ENCODE measurements at regions of chr12 and their contacts with region 1.

Region 1: GRCh38 chr12:121443193-121443870 is 43.4 kb downstream of the RNF34 start:
- DNase-seq: peak; percentile 83 to 93 (median 88)
- H3K4me3 ChIP-seq: no peak overlapping the region
- H3K27ac ChIP-seq: no peak overlapping the region
- H3K4me1 ChIP-seq: no peaks in the 10 kb centered on the region
- H3K27me3 ChIP-seq: no peaks in the 10 kb centered on the region
- CTCF ChIP-seq: peak; percentile 80 to 88 (median 84)
- POLR2A ChIP-seq: no peak

Region 2: GRCh38 chr12:121325922-121326396 is 117.4 kb before region 1 on chr12:
- intact Hi-C with region 1: loop called (anchors 2 to 5 kb)
- DNase-seq: no peak
- H3K4me3 ChIP-seq: no peak overlapping the region
- H3K27ac ChIP-seq: no peak overlapping the region
- H3K4me1 ChIP-seq: peaks cover 0 to 5% of the 10 kb centered on the region in 2 donors
- H3K27me3 ChIP-seq: no peaks in the 10 kb centered on the region
- CTCF ChIP-seq: no peak
- POLR2A ChIP-seq: no peak

Region 3: GRCh38 chr12:121334513-121335343 is 108.6 kb before region 1 on chr12:
- intact Hi-C with region 1: loop called (anchors 1 to 5 kb)
- DNase-seq: peak in 4 of 7 donors; percentile 26 to 38 (median 28)
- H3K4me3 ChIP-seq: no peak overlapping the region
- H3K27ac ChIP-seq: no peak overlapping the region
- H3K4me1 ChIP-seq: no peaks in the 10 kb centered on the region
- H3K27me3 ChIP-seq: no peaks in the 10 kb centered on the region
- CTCF ChIP-seq: peak; percentile 74 to 86 (median 81)
- POLR2A ChIP-seq: no peak